ENCODE measurements at regions of chr7 and their contacts with region 1.

Region 1: GRCh38 chr7:92809397-92810241 is 26.8 kb downstream of the CDK6 start:
- DNase-seq: peak; percentile 78
- H3K4me3 Mint-ChIP-seq: no peak overlapping the region
- H3K27ac Mint-ChIP-seq: peak overlapping the region; percentile 54
- H3K4me1 Mint-ChIP-seq: peaks cover 72% of the 10 kb centered on the region
- H3K27me3 Mint-ChIP-seq: no peaks in the 10 kb centered on the region

Region 2: DNA sequence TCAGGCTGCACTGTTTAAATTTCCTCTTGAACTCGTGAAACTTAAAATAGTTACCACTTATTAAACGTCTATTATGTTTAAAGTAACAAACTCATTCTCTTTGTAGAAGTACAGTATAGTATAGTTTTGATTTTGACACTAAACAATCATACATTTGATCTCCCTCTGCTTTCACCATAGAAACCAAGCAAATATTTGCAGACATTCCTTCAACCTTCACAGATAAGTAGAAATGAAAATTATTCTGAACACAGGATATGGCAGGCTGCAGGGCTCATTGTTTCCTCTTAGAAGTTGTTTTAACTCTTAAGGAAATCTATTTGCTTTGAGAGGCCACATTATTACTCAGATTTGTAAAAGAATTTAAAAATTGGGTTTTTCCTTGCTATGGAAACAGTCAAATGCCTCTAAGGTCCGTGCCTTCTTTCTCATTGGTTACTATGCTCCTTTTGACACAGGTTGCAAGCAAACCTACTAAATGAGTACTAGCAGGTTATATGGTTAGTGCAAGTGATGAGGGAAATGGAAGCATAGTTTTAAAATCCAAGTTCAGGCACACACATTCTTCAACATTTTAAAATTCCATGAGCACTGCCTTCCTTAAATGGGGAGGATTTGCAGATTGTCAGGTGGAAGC is 126.6 kb before region 1 on chr7:
- CTCF ChIA-PET with region 1: no interaction called
- intact Hi-C with region 1: loop called (anchors 1 kb)
- DNase-seq: peak; percentile 44
- H3K4me3 Mint-ChIP-seq: peak overlapping the region; percentile 7
- H3K27ac Mint-ChIP-seq: peak overlapping the region; percentile 90
- H3K4me1 Mint-ChIP-seq: peaks cover 79% of the 10 kb centered on the region
- H3K27me3 Mint-ChIP-seq: no peaks in the 10 kb centered on the region

Region 3: DNA sequence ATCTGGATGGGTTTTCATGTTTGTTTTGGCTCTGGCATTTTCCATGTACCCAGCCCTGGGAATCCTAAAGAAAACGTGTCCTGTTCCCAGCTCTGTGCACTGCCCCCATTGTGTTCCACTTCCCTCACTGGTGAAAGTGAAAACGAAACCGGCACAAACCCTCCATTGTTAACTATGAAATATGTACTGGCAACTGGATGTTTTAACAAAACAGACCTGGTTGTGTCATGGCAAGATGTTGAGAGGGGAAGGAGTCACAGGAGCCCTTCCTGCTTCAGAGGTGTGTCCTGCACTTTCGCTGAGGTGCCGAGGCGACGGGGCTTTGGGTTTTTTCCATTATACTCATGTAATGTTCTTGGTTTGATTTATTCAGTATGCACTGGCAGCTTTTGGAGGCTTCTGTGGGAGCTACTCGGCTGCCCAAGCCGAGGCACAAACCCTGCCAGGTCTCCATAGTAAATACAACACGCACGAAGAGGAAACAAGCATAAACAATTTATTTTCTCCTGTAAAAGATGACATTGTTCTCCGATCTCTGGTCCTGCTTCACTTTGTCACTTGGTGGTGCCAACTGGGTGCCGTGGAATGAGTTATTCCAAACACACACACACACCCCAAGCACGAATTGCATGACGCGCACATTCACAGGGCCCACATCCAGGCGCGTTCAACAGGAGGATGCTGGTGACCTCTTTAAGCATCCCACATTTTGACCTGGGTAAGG is 91.5 kb before region 1 on chr7:
- CTCF ChIA-PET with region 1: no interaction called
- intact Hi-C with region 1: loop called (anchors 1 kb)
- DNase-seq: peak; percentile 82
- H3K4me3 Mint-ChIP-seq: peak overlapping the region; percentile 79
- H3K27ac Mint-ChIP-seq: peak overlapping the region; percentile 93
- H3K4me1 Mint-ChIP-seq: peaks cover 74% of the 10 kb centered on the region
- H3K27me3 Mint-ChIP-seq: no peaks in the 10 kb centered on the region

Region 4: GRCh38 chr7:92797693-92798092 is 11.9 kb before region 1 on chr7:
- CTCF ChIA-PET with region 1: no interaction called
- intact Hi-C with region 1: loop called (anchors 1 kb)
- DNase-seq: peak; percentile 51
- H3K4me3 Mint-ChIP-seq: no peak overlapping the region
- H3K27ac Mint-ChIP-seq: no peak overlapping the region
- H3K4me1 Mint-ChIP-seq: peaks cover 29% of the 10 kb centered on the region
- H3K27me3 Mint-ChIP-seq: no peaks in the 10 kb centered on the region

Region 5: GRCh38 chr7:93036807-93037206 is 227.2 kb after region 1 on chr7:
- CTCF ChIA-PET with region 1: no interaction called
- intact Hi-C with region 1: loop called (anchors 1 kb)
- DNase-seq: peak; percentile 74
- H3K4me3 Mint-ChIP-seq: no peak overlapping the region
- H3K27ac Mint-ChIP-seq: peak overlapping the region; percentile 59
- H3K4me1 Mint-ChIP-seq: peaks cover 22% of the 10 kb centered on the region
- H3K27me3 Mint-ChIP-seq: no peaks in the 10 kb centered on the region